Panc1 (cell line): ENCODE measurements at regions of chr16 and their contacts with region 1.

Region 1: DNA sequence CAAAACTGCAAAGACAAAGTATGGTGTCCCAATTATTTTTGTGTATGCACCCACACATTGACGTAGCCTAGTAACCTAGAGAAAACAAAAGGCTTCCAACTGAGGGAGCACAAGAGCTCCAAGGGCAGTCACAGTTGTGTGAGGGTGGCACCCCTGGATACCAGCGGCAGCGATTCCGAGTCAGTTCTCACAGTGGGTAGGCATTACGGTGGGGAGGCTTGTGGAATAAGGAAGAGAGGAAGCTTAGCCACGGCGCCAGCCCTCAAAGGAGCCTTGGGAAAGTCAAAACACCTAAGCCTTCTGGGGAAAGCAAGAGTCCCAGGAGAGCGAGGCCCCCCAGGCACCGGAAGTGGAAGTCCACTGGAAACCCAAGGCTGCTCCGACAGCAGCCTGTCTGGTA is 31.0 kb upstream of the ADCY9 start:
- DNase-seq: no peak
- ATAC-seq: no peak
- H3K4me3 ChIP-seq: no peak overlapping the region
- H3K27ac ChIP-seq: no peak overlapping the region
- H3K4me1 ChIP-seq: no peaks in the 10 kb centered on the region
- H3K27me3 ChIP-seq: no peaks in the 10 kb centered on the region
- CTCF ChIP-seq: no peak

Region 2: DNA sequence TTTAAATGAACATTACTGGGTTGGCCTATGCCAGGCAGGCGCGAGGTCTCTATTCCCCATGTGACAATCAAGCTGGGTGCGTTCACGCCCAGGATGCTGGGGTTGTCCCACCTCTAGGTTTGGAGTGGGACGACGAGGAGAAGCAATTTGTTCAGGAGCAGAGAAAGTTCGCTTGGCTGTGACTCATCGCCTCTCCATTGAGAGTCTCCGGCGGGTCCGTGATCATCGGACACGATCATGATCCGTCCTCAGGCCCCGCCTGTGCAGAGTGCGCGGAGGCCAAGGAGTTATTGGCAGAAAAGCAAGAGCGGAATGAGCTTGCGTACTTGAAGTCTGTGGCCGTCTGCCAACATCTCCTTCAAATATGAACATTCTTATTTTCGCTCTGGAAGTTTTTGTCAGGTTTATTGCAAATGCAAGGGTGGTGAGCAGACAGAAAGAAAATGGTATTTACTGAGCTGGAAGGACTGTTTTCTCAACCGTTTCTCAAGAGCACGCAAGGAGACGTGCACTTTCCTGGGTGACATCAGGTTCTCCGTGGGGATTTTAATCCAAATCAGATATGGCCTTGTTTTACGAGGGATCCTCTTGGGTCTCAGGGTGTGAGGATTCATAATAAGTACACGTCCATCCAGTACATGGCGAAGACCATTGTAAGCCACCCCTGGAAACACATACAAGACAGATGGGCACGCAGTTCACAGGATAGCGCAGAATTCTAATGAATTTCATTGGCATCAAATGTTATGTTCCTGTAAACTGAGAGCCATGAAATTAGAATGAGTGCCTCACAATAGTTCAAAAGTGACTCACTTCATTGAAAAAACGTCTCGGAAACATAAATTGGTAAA is 196.7 kb before region 1 on chr16:
- CTCF ChIA-PET with region 1: no interaction called
- POLR2A ChIA-PET with region 1: interaction called, 14 read pairs
- in situ Hi-C with region 1: no loop called
- intact Hi-C with region 1: no loop called
- DNase-seq: no peak
- ATAC-seq: no peak
- H3K4me3 ChIP-seq: no peak overlapping the region
- H3K27ac ChIP-seq: peak overlapping the region; percentile 20; the same call in 1 of the 2 replicates
- H3K4me1 ChIP-seq: peaks cover 15% of the 10 kb centered on the region
- H3K27me3 ChIP-seq: no peaks in the 10 kb centered on the region
- CTCF ChIP-seq: no peak

Region 3: GRCh38 chr16:4038448-4038847 is 108.8 kb before region 1 on chr16:
- CTCF ChIA-PET with region 1: no interaction called
- POLR2A ChIA-PET with region 1: no interaction called
- in situ Hi-C with region 1: no loop called
- intact Hi-C with region 1: no loop called
- DNase-seq: no peak
- ATAC-seq: no peak
- H3K4me3 ChIP-seq: no peak overlapping the region
- H3K27ac ChIP-seq: no peak overlapping the region
- H3K4me1 ChIP-seq: no peaks in the 10 kb centered on the region
- H3K27me3 ChIP-seq: no peaks in the 10 kb centered on the region
- CTCF ChIP-seq: no peak